Common myeloid progenitor, CD34-positive (primary cell): ENCODE measurements at regions of chr22 and their contacts with region 1.

Region 1: DNA sequence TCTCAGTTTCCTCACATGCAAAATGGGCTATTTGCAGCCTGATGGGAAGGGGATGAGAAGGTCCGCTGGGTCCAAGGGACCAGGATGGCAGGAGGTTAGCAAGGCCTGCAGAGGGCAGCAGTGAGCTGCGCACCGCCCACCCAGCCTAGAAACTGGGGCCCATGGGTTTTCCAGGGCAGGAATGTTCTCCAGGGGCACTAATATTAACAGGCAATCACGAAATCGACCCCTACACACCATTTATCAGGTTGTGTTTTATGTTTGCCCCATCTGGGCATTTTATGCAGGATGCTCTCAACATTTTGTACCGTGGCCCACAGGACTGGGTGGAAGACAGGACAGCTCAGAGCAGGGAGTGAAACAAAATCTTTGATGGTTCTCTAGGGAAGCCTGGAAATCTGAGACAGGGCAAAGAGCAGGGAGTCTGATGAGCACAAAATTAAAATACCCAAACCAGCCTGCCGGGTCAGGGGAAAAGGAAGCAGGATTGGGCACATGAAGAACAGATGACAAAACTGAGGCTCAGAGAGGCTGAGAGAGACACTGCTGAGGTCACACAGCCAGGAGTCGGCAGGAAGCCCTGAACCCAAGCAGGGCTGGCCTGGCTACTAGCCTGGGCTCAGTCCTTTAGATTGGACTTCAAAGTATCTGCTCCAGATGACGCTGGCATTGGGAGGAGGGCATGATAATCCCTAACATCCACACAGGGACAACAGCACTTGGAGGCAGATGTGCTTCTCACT is 1.6 kb upstream of the BCR start:
- DNase-seq: peak; percentile 54 to 72 (median 63)
- H3K4me3 ChIP-seq: peak overlapping the region in 2 of 7 experiments; percentile 6 to 78
- H3K27ac ChIP-seq: no peak overlapping the region
- H3K4me1 ChIP-seq: peaks cover 8 to 55% (median 41%) of the 10 kb centered on the region in 4 experiments
- H3K27me3 ChIP-seq: no peaks in the 10 kb centered on the region

Region 2: DNA sequence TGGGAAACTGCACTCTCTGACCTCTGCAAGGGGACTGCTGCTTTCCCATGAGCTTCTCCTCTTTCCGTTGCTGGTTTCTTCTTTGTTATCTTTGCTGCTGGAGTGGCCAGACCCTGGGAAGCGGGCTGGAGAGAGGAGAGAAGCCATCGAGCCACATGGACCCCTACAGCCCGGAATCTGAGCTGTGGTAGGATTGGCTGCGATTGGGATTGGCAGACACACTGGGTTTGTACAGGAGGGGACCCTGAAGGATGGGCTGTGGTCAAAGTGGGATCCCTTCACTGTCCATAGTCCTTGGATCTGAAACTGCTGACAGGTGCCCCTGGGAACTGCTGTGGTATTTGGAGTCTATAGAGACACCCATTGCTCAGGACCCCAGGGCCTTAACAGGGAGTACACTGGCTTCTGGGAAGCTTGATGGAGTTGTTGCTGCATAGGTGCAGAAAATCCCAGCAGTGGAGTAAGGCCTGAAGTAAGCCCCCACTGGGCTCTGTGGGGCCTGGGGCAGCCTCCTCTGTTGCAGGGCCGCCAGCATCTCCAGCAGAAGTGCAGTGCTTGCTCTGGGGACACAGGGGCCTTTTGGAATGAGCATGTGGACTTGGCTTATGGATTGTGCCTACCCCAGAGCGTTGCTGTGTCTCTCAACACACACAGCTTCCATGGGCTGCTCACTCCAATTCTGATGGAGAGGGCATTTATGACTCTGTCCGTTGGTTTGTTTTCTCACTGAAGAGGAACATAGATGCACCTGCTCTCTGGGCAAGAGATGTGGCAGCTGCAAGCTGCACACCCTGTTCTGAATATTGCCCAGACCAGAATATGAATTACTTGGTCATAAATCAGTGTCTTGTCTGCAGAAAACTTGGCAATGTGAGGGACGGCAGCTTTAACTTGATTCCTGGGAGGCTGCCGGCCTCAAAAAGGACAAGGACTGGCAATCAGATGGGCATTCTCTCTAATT is 33.7 kb after region 1 on chr22:
- CTCF ChIA-PET with region 1: interaction called, 18 read pairs
- POLR2A ChIA-PET with region 1: interaction called, 30 read pairs
- DNase-seq: peak in 2 of 3 donors; percentile 66 to 78
- H3K4me3 ChIP-seq: peak overlapping the region in 5 of 7 experiments; percentile 4 to 53 (median 34)
- H3K27ac ChIP-seq: peak overlapping the region; percentile 61 to 91
- H3K4me1 ChIP-seq: peaks cover 33 to 80% (median 69%) of the 10 kb centered on the region in 4 experiments
- H3K27me3 ChIP-seq: no peaks in the 10 kb centered on the region

Region 3: GRCh38 chr22:23225724-23226496 is 47.2 kb after region 1 on chr22:
- CTCF ChIA-PET with region 1: interaction called, 11 read pairs
- POLR2A ChIA-PET with region 1: interaction called, 3 read pairs
- DNase-seq: peak in 1 of 3 donors; percentile 35
- H3K4me3 ChIP-seq: peak overlapping the region in 2 of 7 experiments; percentile 33 to 50
- H3K27ac ChIP-seq: peak overlapping the region; percentile 56 to 81
- H3K4me1 ChIP-seq: peaks cover 27 to 72% (median 62%) of the 10 kb centered on the region in 4 experiments
- H3K27me3 ChIP-seq: no peaks in the 10 kb centered on the region

Region 4: DNA sequence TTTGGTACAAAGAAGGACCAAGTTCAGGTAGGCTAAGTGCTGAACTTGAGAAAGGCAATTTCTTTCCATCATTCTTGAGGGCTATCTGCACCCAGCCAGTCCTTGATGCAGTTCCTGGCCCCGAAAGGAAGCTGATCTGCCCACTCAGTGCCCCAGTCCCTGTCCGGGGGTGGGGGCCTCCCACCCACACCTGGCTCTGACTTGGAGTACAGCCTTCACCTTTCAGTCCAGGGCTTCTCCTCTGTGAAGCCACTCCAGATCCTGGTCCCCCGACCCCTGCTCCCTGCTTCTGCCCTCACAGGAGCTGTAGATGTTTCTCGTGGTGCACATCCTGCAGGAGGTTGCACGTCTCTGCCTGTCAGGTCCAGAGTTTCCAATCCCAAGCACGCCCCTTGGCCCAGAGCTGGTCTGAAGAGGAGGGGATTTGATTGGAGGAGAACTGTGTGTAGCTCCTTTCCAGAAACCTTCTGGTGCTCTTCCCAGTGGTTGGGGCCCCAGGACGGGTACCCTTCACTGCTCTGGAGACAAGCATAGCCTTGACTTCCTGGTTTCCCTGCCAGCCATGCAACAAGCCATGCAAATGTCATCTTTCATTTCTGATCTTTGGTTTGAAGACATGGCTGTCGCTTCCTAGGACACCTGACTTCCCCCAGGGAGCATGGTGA is 77.0 kb after region 1 on chr22:
- CTCF ChIA-PET with region 1: interaction called, 10 read pairs
- POLR2A ChIA-PET with region 1: no interaction called
- DNase-seq: no peak
- H3K4me3 ChIP-seq: no peak overlapping the region
- H3K27ac ChIP-seq: peak overlapping the region in 1 of 2 experiments; percentile 1
- H3K4me1 ChIP-seq: peaks cover 0 to 5% (median 1%) of the 10 kb centered on the region in 4 experiments
- H3K27me3 ChIP-seq: no peaks in the 10 kb centered on the region

Region 5: GRCh38 chr22:23281406-23282088 is 102.9 kb after region 1 on chr22:
- CTCF ChIA-PET with region 1: interaction called, 80 read pairs
- POLR2A ChIA-PET with region 1: interaction called, 3 read pairs
- DNase-seq: peak; percentile 82 to 88 (median 84)
- H3K4me3 ChIP-seq: peak overlapping the region in 1 of 7 experiments; percentile 24
- H3K27ac ChIP-seq: no peak overlapping the region
- H3K4me1 ChIP-seq: peaks cover 0 to 11% (median 9%) of the 10 kb centered on the region in 4 experiments
- H3K27me3 ChIP-seq: no peaks in the 10 kb centered on the region